ENCODE measurements at regions of chr1 and their contacts with region 1.

Region 1: GRCh38 chr1:28248283-28249012 is 10.9 kb upstream of the SESN2 start:
- DNase-seq: peak; percentile 73 to 86 (median 82)
- ATAC-seq: peak; percentile 37 to 53 (median 48)
- H3K4me3 ChIP-seq: peak overlapping the region in 9 of 12 donors; percentile 11 to 33 (median 20)
- H3K27ac ChIP-seq: peak overlapping the region; percentile 37 to 97 (median 86)
- H3K4me1 ChIP-seq: peaks cover 0 to 74% (median 26%) of the 10 kb centered on the region in 12 donors
- H3K27me3 ChIP-seq: no peaks in the 10 kb centered on the region
- CTCF ChIP-seq: peak; percentile 88 to 98 (median 94)
- POLR2A ChIP-seq: no peak

Region 2: GRCh38 chr1:28329395-28330153 is 81.1 kb after region 1 on chr1:
- intact Hi-C with region 1: loop called in 7 of 10 experiments (anchors 2 to 10 kb)
- DNase-seq: peak in 2 of 5 donors; percentile 20 to 33
- ATAC-seq: peak; percentile 14 to 29 (median 21)
- H3K4me3 ChIP-seq: peak overlapping the region; percentile 25 to 92 (median 73)
- H3K27ac ChIP-seq: peak overlapping the region; percentile 71 to 93 (median 86)
- H3K4me1 ChIP-seq: peaks cover 0 to 34% (median 13%) of the 10 kb centered on the region in 12 donors
- H3K27me3 ChIP-seq: no peaks in the 10 kb centered on the region
- CTCF ChIP-seq: peak in 1 of 12 donors; percentile 10
- POLR2A ChIP-seq: no peak

Region 3: DNA sequence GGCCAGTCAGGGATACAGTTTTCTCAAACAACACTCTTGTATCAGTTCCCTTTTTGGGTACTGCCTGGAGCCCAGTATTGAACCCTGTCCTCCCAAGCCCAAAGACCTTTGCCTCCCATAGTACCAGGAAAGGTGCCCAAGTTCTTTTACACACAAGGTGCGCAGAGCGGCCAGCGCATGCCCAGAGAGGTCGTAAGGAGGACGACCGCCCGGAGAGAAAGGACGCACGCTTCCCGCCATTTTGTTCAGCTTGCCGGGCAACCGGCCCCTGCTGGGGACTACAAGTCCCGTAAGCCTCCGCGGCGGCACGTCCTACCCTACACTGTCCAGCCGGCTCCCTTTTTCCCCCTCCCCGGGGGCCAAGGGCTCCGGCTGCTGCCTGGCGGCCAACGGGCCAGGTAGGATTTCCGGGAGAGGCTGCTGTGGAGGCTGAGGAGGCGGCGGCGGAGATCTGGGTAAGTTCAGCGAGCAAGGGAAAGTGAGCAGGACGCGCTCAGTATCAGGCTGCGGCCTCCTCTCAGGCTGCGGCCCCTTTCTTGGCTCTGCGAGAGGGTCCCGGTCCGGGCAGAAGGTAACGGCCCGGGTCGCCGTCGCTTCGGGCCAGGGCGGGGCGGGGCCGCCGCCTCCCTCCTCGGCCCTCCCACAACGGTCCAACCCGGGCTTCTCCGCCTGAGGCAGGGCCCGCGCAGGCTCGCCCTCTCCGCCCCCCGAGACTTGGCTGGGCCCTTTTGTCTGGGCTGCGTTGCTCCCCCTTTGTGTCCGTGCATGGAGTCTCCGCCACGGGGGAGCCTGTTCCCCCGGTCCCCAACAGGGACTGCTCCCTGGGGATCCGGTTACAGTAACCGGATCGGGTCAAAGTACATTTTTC is 121.2 kb after region 1 on chr1 and contains the start of gene PHACTR4:
- intact Hi-C with region 1: loop called in 2 of 10 experiments (anchors 2 to 5 kb)
- DNase-seq: peak; percentile 93 to 96 (median 96)
- ATAC-seq: peak; percentile 97 to 99 (median 98)
- H3K4me3 ChIP-seq: peak within 1 kb of the TSS; percentile 48 to 98 (median 81)
- H3K27ac ChIP-seq: peak within 1 kb of the TSS; percentile 59 to 99 (median 94)
- H3K4me1 ChIP-seq: peaks cover 0 to 35% (median 15%) of the 10 kb centered on the region in 12 donors
- H3K27me3 ChIP-seq: no peaks in the 10 kb centered on the region
- CTCF ChIP-seq: no peak
- POLR2A ChIP-seq: peak in 1 of 2 donors; percentile 89
- total RNA-seq, gene PHACTR4: 13.6 to 30.5 (median 19.0) TPM

Region 4: DNA sequence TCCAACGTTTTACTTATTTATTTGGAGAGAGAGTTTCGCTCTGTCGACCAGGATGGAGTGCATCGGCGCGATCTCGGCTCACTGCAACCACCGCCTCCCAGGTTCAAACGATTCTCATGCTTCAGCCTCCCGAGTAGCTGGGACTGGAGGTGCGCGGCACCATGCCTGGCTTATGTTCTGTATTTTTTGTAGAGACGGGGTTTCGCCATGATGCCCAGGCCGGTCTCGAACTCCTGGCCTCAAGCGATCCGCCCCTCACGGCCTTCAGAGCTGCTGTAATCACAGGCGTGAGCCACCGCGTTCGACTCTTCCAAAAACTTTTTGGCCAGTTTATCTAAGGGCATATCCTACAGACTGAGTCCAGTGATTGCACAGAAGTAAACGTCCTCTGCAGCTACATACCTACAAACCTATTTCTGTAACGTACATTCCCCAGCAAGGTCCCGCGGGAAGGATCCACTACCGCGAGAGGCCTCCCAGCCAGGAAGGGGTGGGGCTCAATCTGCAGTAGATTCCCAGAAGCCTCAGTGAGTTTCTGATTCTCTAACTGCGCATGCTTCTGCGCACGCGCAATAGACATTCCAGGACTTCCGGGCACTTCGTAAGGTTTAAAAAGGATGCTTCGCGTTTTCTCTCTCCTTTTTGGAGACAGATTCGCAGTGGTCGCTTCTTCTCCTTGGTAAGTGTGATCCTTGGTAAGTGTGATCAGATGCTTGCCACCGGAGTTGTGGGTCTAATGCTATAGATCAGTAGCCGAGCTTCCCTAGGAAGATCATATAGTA is 257.1 kb after region 1 on chr1 and contains the start of gene RCC1:
- intact Hi-C with region 1: loop called in 2 of 10 experiments (anchors 5 kb)
- DNase-seq: peak; percentile 96 to 99 (median 97)
- ATAC-seq: peak; percentile 97 to 99 (median 98)
- H3K4me3 ChIP-seq: peak within 1 kb of the TSS; percentile 66 to 86 (median 78)
- H3K27ac ChIP-seq: peak within 1 kb of the TSS; percentile 51 to 94 (median 86)
- H3K4me1 ChIP-seq: peaks cover 6 to 44% (median 34%) of the 10 kb centered on the region in 12 donors
- H3K27me3 ChIP-seq: no peaks in the 10 kb centered on the region
- CTCF ChIP-seq: no peak
- POLR2A ChIP-seq: peak; percentile 63 to 94
- total RNA-seq, gene RCC1: 2.4 to 20.1 (median 5.0) TPM

Measured in heart left ventricle (tissue), 16 donors.